Activated naive CD4-positive, alpha-beta T cell treated with anti-CD3 and anti-CD28 coated beads for 36 hours (primary cell): ENCODE measurements at regions of chr4 and their contacts with region 1.

Region 1: DNA sequence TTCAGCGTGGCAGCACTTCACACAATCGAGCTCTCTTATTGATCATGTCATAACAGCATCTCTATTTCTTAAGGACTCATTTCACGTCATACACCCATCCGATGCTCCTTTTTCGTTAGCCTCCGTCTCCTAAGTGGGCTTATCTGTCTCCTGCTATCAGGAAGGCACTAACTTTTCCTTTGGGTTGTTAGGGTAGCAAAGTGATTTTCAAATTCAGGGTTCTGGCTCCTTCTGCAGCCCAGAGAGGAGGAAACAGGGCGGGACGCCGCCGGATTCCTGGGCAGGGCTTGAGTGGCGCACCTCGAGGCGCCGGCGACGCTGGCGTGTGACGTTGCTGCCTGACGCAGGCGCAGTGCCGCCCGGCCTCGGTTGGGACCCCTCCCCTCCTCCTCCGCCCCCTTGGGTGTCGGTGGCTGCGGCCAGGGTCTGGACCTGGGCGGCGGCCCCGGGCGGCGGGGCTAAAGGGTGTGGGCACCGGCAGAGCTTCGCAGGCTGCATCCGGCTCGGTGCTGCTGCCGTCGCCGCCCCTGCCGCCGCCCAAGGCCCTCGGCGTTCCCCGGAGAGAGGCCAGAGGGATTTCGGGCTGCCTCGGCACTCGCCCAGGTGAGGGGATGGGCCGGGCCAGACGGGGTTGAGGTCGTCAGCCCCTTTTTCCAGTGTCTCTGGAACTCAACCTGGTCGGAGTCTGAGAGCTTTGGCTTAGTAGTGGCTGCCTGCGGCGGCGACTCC is at the start of gene BLTP1:
- DNase-seq: peak; percentile 88
- H3K4me3 Mint-ChIP-seq: peak within 1 kb of the TSS; percentile 95
- H3K27ac Mint-ChIP-seq: peak within 1 kb of the TSS; percentile 96
- H3K4me1 Mint-ChIP-seq: peaks cover 52% of the 10 kb centered on the region
- H3K27me3 Mint-ChIP-seq: no peaks in the 10 kb centered on the region
- total RNA-seq, gene BLTP1: 20.5 to 23.6 TPM

Region 2: GRCh38 chr4:121800961-121801714 is 351.0 kb before region 1 on chr4 and contains the start of gene EXOSC9:
- CTCF ChIA-PET with region 1: no interaction called
- intact Hi-C with region 1: loop called (anchors 2 kb)
- DNase-seq: peak; percentile 95
- H3K4me3 Mint-ChIP-seq: peak within 1 kb of the TSS; percentile 89
- H3K27ac Mint-ChIP-seq: peak within 1 kb of the TSS; percentile 98
- H3K4me1 Mint-ChIP-seq: peaks cover 46% of the 10 kb centered on the region
- H3K27me3 Mint-ChIP-seq: no peaks in the 10 kb centered on the region
- total RNA-seq, gene EXOSC9: 57.7 to 58.7 TPM

Region 3: DNA sequence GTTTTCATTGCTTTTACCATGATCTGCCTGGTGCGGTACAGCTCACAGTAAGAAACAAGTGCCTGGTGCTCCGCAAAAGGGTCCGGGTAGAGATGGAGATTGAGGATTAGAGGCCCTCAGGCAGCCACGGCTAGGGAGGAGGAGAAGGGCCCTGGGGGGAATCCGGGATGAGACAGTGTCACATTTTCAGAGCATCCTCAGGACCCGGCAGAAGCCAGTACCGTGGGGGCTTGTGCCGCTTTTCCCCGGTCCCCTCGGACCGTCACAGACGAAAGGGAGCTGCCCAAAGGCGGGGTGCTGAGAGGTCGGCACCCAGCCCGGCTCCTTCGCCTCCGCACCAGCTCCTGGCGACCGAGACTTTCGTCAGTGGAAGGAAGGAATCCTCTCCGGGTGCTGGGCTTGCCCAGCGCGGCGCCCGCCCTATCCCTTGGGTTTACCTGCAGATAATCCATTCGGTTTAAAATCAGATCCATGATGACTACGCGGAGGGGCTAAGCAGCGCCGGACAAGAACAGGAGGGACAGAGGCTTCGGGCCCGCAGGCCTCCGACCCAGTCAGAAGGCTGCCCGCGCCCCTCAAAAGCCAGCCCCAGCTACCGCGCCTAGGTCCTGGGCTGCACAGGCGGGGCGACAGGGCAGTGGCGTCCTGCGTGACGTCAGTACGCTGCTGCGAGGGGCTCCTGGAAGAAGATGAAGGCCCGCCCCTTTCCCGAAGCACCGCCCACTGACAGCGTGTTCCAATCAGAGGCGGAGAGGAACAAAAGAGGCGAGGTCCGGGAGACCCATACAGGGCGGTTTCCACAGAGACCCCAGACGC is 282.1 kb before region 1 on chr4 and contains the start of gene BBS7:
- CTCF ChIA-PET with region 1: interaction called, 3 read pairs
- intact Hi-C with region 1: loop called (anchors 1 kb)
- DNase-seq: peak; percentile 99
- H3K4me3 Mint-ChIP-seq: peak within 1 kb of the TSS; percentile 95
- H3K27ac Mint-ChIP-seq: peak within 1 kb of the TSS; percentile 76
- H3K4me1 Mint-ChIP-seq: peaks cover 30% of the 10 kb centered on the region
- H3K27me3 Mint-ChIP-seq: peaks cover 11% of the 10 kb centered on the region
- total RNA-seq, gene BBS7: 16.6 to 19.4 TPM

Region 4: GRCh38 chr4:122131562-122132157 is 20.5 kb before region 1 on chr4:
- CTCF ChIA-PET with region 1: no interaction called
- intact Hi-C with region 1: loop called (anchors 1 kb)
- DNase-seq: no peak
- H3K4me3 Mint-ChIP-seq: no peak overlapping the region
- H3K27ac Mint-ChIP-seq: no peak overlapping the region
- H3K4me1 Mint-ChIP-seq: peaks cover 15% of the 10 kb centered on the region
- H3K27me3 Mint-ChIP-seq: no peaks in the 10 kb centered on the region

Region 5: DNA sequence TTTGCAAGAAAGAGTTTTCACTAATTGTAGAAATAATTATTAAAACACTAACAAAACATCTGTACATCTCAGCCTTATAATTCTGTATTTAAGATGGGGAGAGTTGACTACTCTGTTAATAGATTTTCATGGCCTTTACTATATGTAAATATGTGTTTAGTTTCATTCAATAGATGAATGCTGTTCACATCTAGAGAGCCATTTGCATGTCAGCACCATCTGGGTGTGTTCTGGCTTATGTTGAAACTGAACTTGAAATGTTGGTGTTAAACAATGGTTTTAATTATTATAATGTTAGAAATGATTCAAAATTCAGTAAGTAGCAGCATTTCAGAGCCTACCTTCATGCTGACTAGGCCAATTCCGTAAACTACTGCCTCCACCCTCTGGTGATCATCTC is 124.2 kb after region 1 on chr4:
- CTCF ChIA-PET with region 1: no interaction called
- intact Hi-C with region 1: no loop called
- DNase-seq: no peak
- H3K4me3 Mint-ChIP-seq: no peak overlapping the region
- H3K27ac Mint-ChIP-seq: no peak overlapping the region
- H3K4me1 Mint-ChIP-seq: no peaks in the 10 kb centered on the region
- H3K27me3 Mint-ChIP-seq: no peaks in the 10 kb centered on the region

Region 6: DNA sequence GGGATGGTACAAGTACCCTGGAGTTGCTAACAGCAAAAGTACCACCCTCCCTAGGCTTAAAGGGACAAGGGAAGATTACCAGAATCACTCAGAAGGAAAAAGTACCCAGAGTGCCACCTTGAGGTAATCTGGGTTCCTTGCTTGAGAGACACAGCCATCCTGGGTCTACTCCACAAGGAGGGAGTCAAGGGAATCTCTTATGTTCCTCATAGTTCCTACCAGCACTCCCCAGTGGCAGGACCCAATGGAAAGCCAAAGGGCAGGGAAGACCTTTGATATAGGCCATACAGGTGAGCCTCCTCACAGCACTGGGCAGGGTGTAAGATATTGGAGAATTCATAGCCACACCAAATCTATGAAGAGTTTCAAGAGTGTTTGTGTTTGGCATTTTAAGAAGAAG is 298.7 kb after region 1 on chr4:
- CTCF ChIA-PET with region 1: interaction called, 3 read pairs
- intact Hi-C with region 1: loop called (anchors 2 kb)
- DNase-seq: peak; percentile 59
- H3K4me3 Mint-ChIP-seq: peak overlapping the region; percentile 67
- H3K27ac Mint-ChIP-seq: peak overlapping the region; percentile 96
- H3K4me1 Mint-ChIP-seq: peaks cover 17% of the 10 kb centered on the region
- H3K27me3 Mint-ChIP-seq: no peaks in the 10 kb centered on the region